SK-N-SH (cell line): ENCODE measurements at regions of chr11 and their contacts with region 1.

Region 1: GRCh38 chr11:11966826-11967668 is 41.4 kb downstream of the DKK3 start:
- DNase-seq: peak; percentile 77
- H3K4me3 ChIP-seq: no peak overlapping the region; a peak in 1 of 4 replicates
- H3K27ac ChIP-seq: peak overlapping the region; percentile 85 to 100; a peak in 3 of 4 replicates
- H3K4me1 ChIP-seq: peaks cover 22 to 80% of the 10 kb centered on the region in 2 experiments
- H3K27me3 ChIP-seq: no peaks in the 10 kb centered on the region
- CTCF ChIP-seq: peak; percentile 76
- EP300 ChIP-seq: no peak
- RAD21 ChIP-seq: peak; percentile 64

Region 2: GRCh38 chr11:11946180-11946579 is 20.9 kb before region 1 on chr11:
- CTCF ChIA-PET with region 1: interaction called, 16 read pairs
- POLR2A ChIA-PET with region 1: no interaction called
- DNase-seq: no peak
- H3K4me3 ChIP-seq: no peak overlapping the region
- H3K27ac ChIP-seq: peak overlapping the region; percentile 60 to 65
- H3K4me1 ChIP-seq: peaks cover 5 to 13% of the 10 kb centered on the region in 2 experiments
- H3K27me3 ChIP-seq: no peaks in the 10 kb centered on the region
- CTCF ChIP-seq: no peak
- EP300 ChIP-seq: no peak
- RAD21 ChIP-seq: no peak

Region 3: GRCh38 chr11:12110201-12110713 is 143.2 kb after region 1 on chr11 and contains the start of gene MICAL2:
- CTCF ChIA-PET with region 1: no interaction called
- POLR2A ChIA-PET with region 1: no interaction called
- DNase-seq: peak; percentile 98
- H3K4me3 ChIP-seq: peak within 1 kb of the TSS; percentile 66 to 77
- H3K27ac ChIP-seq: peak within 1 kb of the TSS in 1 of 2 experiments; percentile 85; a peak in 2 of 4 replicates
- H3K4me1 ChIP-seq: peaks cover 0 to 10% of the 10 kb centered on the region in 2 experiments; a peak in 1 of 4 replicates
- H3K27me3 ChIP-seq: no peaks in the 10 kb centered on the region
- CTCF ChIP-seq: no peak
- EP300 ChIP-seq: no peak
- RAD21 ChIP-seq: no peak; the same call in 1 of the 2 replicates
- polyA plus RNA-seq, gene MICAL2: 54.6 and 67.9 TPM in 2 replicates